ENCODE measurements at regions of chr3 and their contacts with region 1.

Region 1: DNA sequence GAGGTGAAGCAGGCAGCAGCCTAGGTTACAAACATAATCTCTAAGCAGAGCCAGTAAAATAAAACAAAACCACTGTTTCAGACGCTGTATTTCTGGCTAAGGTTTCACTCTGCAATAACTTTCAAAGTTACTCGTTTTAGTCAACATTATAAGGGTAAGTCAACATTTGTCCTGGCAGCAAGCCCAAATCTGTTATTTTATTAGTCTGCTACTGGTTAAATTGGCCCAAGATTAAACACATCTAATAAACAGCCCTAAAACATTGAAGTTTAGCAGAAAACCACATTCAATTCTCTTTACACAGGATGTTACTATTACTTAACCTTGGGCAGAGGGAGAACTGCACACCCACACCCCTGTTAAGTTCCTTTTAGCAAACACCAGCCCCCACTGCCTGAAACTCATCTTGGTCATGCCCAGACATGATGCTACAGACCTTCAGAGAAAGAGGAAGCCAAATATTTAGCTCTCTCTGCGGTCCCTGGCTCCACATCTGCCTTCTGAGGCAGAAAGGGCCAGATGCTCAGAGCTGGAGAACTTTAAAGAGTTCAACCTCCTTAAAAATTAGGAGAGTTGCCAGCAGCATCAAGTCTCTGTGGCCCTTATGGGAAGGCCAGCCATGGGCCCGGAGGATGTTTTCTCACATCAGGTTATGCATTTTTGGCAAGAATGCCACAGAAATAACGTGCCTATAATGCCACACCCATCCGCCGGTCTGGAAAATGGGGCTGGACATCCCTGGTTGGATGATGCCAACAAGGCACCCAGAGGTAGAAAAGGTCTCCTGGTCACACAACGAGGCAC is 17.9 kb downstream of the ARHGEF3 start:
- DNase-seq: peak in 8 of 9 donors; percentile 63 to 86 (median 78)
- ATAC-seq: peak; percentile 95
- H3K4me3 ChIP-seq: peak overlapping the region; percentile 31
- H3K4me3 Mint-ChIP-seq: peak overlapping the region; percentile 38 to 85 (median 78)
- H3K27ac ChIP-seq: peak overlapping the region; percentile 63
- H3K27ac Mint-ChIP-seq: peak overlapping the region; percentile 76 to 98 (median 96)
- H3K4me1 ChIP-seq: peaks cover 94 to 96% of the 10 kb centered on the region in 2 donors
- H3K4me1 Mint-ChIP-seq: peaks cover 76 to 100% (median 98%) of the 10 kb centered on the region in 7 donors
- H3K27me3 ChIP-seq: no peaks in the 10 kb centered on the region
- H3K27me3 Mint-ChIP-seq: peaks cover 0 to 2% (median 0%) of the 10 kb centered on the region in 5 donors

Region 2: DNA sequence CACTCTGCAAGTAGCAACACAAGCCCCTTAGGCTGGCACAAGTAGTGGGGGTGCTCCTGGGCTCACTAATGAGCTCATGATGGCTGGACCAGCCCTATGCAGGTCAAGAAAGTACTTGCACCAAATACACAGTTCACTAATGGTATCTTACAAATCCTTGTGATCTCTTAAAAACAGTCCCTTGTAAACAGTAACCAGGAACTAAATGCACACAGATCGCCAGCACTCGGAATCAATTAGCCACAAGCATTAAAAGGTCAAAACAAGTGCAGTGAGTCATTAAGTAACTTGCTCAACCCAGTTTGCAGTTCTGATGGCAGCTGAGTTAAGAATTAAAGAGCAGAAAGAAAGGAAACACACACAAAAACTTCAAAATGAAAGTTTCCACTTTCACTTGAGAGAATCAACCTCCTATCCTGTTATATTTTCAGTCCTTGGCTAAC is 25.3 kb before region 1 on chr3:
- CTCF ChIA-PET with region 1: interaction called, 7 read pairs
- POLR2A ChIA-PET with region 1: interaction called, 41 read pairs
- intact Hi-C with region 1: loop called (anchors 1 kb)
- DNase-seq: peak in 3 of 9 donors; percentile 7 to 37 (median 27)
- ATAC-seq: peak; percentile 75
- H3K4me3 ChIP-seq: no peak overlapping the region
- H3K4me3 Mint-ChIP-seq: peak overlapping the region; percentile 34 to 83 (median 67)
- H3K27ac ChIP-seq: peak overlapping the region; percentile 51
- H3K27ac Mint-ChIP-seq: peak overlapping the region; percentile 78 to 94 (median 89)
- H3K4me1 ChIP-seq: peaks cover 44 to 47% of the 10 kb centered on the region in 2 donors
- H3K4me1 Mint-ChIP-seq: peaks cover 62 to 94% (median 89%) of the 10 kb centered on the region in 7 donors
- H3K27me3 ChIP-seq: no peaks in the 10 kb centered on the region
- H3K27me3 Mint-ChIP-seq: no peaks in the 10 kb centered on the region

Region 3: GRCh38 chr3:56769116-56769707 is 14.6 kb before region 1 on chr3:
- CTCF ChIA-PET with region 1: interaction called, 3 read pairs
- POLR2A ChIA-PET with region 1: interaction called, 8 read pairs
- intact Hi-C with region 1: loop called in 1 of 2 experiments (anchors 1 kb)
- DNase-seq: no peak
- ATAC-seq: no peak
- H3K4me3 ChIP-seq: no peak overlapping the region
- H3K4me3 Mint-ChIP-seq: peak overlapping the region in 1 of 10 donors; percentile 6
- H3K27ac ChIP-seq: no peak overlapping the region
- H3K27ac Mint-ChIP-seq: peak overlapping the region; percentile 3 to 89 (median 64)
- H3K4me1 ChIP-seq: peaks cover 15 to 21% of the 10 kb centered on the region in 2 donors
- H3K4me1 Mint-ChIP-seq: peaks cover 50 to 83% (median 72%) of the 10 kb centered on the region in 7 donors
- H3K27me3 ChIP-seq: no peaks in the 10 kb centered on the region
- H3K27me3 Mint-ChIP-seq: no peaks in the 10 kb centered on the region

Measured in naive thymus-derived CD4-positive, alpha-beta T cell (primary cell).